ENCODE measurements at regions of chr3 and their contacts with region 1.

Region 1: DNA sequence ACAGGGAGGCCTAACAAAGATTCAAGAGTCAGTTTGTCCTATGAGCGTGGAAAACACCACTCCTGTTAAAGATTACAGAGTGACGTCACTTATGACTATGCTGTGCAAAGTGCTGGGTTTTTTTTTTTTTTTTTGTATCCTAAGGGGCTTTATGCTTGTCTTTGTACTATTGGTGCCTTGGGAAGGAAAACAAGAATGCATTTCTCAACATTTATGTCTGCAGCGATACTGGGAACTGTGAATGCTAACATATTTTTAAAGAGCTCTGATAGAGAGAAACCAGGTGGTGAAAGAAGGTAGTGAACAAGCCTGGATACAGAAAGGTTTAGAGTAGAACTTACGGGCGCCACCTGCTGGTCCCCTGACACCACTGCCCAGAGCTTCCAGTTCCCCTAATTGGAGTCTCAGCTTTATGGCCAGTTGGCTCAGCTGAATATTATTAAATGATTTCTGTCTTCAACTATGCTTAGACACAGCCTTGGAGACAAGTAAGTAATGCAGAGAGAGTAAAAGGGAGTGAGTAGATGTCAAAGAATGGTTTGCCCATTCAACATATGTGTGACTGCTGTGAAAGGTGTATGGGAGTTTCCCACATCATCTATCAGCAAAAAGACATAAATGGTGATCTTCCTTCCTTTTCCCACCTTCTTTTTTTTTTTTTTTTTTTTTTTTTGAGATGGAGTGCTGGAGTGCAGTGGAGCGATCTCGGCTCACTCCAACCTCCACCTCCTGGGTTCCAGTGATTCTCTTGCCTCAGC is 807.9 kb upstream of the CFAP20DC start:
- DNase-seq: peak; percentile 74 to 77
- H3K4me3 ChIP-seq: no peak overlapping the region
- H3K4me3 Mint-ChIP-seq: no peak overlapping the region
- H3K27ac Mint-ChIP-seq: no peak overlapping the region
- H3K4me1 ChIP-seq: no peaks in the 10 kb centered on the region
- H3K4me1 Mint-ChIP-seq: no peaks in the 10 kb centered on the region
- H3K27me3 ChIP-seq: no peaks in the 10 kb centered on the region; the same call in 1 of the 2 replicates
- H3K27me3 Mint-ChIP-seq: peaks cover 4% of the 10 kb centered on the region
- CTCF ChIP-seq: peak; percentile 85 to 92

Region 2: GRCh38 chr3:58994746-58995330 is 862.9 kb before region 1 on chr3:
- CTCF ChIA-PET with region 1: no interaction called
- POLR2A ChIA-PET with region 1: no interaction called
- intact Hi-C with region 1: loop called (anchors 1 kb)
- DNase-seq: peak; percentile 43 to 63
- H3K4me3 ChIP-seq: no peak overlapping the region
- H3K4me3 Mint-ChIP-seq: no peak overlapping the region
- H3K27ac Mint-ChIP-seq: no peak overlapping the region
- H3K4me1 ChIP-seq: no peaks in the 10 kb centered on the region
- H3K4me1 Mint-ChIP-seq: no peaks in the 10 kb centered on the region
- H3K27me3 ChIP-seq: no peaks in the 10 kb centered on the region
- H3K27me3 Mint-ChIP-seq: no peaks in the 10 kb centered on the region
- CTCF ChIP-seq: peak; percentile 63 to 80

Region 3: GRCh38 chr3:59212128-59212779 is 645.5 kb before region 1 on chr3:
- CTCF ChIA-PET with region 1: interaction called, 4 read pairs
- POLR2A ChIA-PET with region 1: no interaction called
- intact Hi-C with region 1: loop called (anchors 5 kb)
- DNase-seq: peak in 1 of 2 experiments; percentile 35
- H3K4me3 ChIP-seq: no peak overlapping the region
- H3K4me3 Mint-ChIP-seq: no peak overlapping the region
- H3K27ac Mint-ChIP-seq: no peak overlapping the region
- H3K4me1 ChIP-seq: no peaks in the 10 kb centered on the region
- H3K4me1 Mint-ChIP-seq: no peaks in the 10 kb centered on the region
- H3K27me3 ChIP-seq: no peaks in the 10 kb centered on the region
- H3K27me3 Mint-ChIP-seq: peaks cover 6% of the 10 kb centered on the region
- CTCF ChIP-seq: peak; percentile 46 to 61

Region 4: GRCh38 chr3:59575113-59576001 is 282.4 kb before region 1 on chr3:
- CTCF ChIA-PET with region 1: interaction called, 35 read pairs
- POLR2A ChIA-PET with region 1: no interaction called
- intact Hi-C with region 1: loop called (anchors 1 kb)
- DNase-seq: peak; percentile 81 to 85
- H3K4me3 ChIP-seq: no peak overlapping the region
- H3K4me3 Mint-ChIP-seq: no peak overlapping the region
- H3K27ac Mint-ChIP-seq: no peak overlapping the region
- H3K4me1 ChIP-seq: no peaks in the 10 kb centered on the region
- H3K4me1 Mint-ChIP-seq: no peaks in the 10 kb centered on the region
- H3K27me3 ChIP-seq: no peaks in the 10 kb centered on the region; the same call in 1 of the 2 replicates
- H3K27me3 Mint-ChIP-seq: peaks cover 16% of the 10 kb centered on the region
- CTCF ChIP-seq: peak; percentile 90 to 92

Region 5: DNA sequence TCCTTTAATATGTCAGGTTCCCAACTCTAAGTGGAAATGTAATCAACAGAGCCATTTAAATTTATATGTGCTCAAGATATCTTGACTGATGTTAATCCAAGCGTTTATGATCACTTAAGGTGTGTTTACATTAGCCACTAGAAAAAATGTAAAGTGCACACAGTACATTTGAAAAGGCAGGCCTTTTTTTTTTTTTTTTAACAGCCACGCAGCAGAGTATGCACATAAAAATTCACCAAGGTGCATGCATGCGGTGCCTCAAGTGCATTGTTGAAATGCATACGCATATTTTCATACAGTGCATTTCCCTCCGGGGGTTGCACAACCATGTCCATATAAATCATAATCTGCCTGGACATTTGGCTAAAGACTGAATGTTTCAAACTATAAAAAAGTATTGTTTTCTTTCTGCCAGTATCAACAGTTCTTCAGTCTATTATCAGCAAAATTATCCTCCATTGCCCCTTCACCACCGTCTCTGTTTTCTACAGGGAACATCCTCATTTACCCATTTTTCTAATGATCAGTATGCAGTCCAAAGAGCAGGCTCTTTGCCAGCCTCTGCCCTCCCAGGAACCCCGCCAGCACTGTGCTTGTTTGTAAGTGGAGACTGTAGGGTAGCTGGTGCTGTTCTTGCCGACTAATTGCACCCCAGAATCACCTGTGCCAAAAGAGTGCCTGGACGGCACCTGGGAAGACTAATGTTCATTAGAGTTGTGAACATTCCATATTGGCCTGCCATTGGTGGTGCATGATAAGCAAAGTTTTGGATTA is 196.7 kb before region 1 on chr3:
- CTCF ChIA-PET with region 1: no interaction called
- POLR2A ChIA-PET with region 1: no interaction called
- intact Hi-C with region 1: loop called (anchors 1 kb)
- DNase-seq: no peak
- H3K4me3 ChIP-seq: no peak overlapping the region
- H3K4me3 Mint-ChIP-seq: no peak overlapping the region
- H3K27ac Mint-ChIP-seq: no peak overlapping the region
- H3K4me1 ChIP-seq: peaks cover 18% of the 10 kb centered on the region
- H3K4me1 Mint-ChIP-seq: peaks cover 16% of the 10 kb centered on the region
- H3K27me3 ChIP-seq: no peaks in the 10 kb centered on the region
- H3K27me3 Mint-ChIP-seq: peaks cover 3% of the 10 kb centered on the region
- CTCF ChIP-seq: no peak

Region 6: GRCh38 chr3:59839810-59840515 is 17.8 kb before region 1 on chr3:
- CTCF ChIA-PET with region 1: no interaction called
- POLR2A ChIA-PET with region 1: no interaction called
- intact Hi-C with region 1: no loop called
- DNase-seq: no peak
- H3K4me3 ChIP-seq: no peak overlapping the region
- H3K4me3 Mint-ChIP-seq: no peak overlapping the region
- H3K27ac Mint-ChIP-seq: no peak overlapping the region
- H3K4me1 ChIP-seq: no peaks in the 10 kb centered on the region
- H3K4me1 Mint-ChIP-seq: no peaks in the 10 kb centered on the region
- H3K27me3 ChIP-seq: no peaks in the 10 kb centered on the region
- H3K27me3 Mint-ChIP-seq: peaks cover 7% of the 10 kb centered on the region
- CTCF ChIP-seq: no peak

Region 7: GRCh38 chr3:60046210-60046609 is 188.4 kb after region 1 on chr3:
- CTCF ChIA-PET with region 1: no interaction called
- POLR2A ChIA-PET with region 1: no interaction called
- intact Hi-C with region 1: no loop called
- DNase-seq: no peak
- H3K4me3 ChIP-seq: no peak overlapping the region
- H3K4me3 Mint-ChIP-seq: no peak overlapping the region
- H3K27ac Mint-ChIP-seq: no peak overlapping the region
- H3K4me1 ChIP-seq: no peaks in the 10 kb centered on the region
- H3K4me1 Mint-ChIP-seq: no peaks in the 10 kb centered on the region
- H3K27me3 ChIP-seq: no peaks in the 10 kb centered on the region
- H3K27me3 Mint-ChIP-seq: no peaks in the 10 kb centered on the region
- CTCF ChIP-seq: no peak

Measured in Caco-2 (cell line).